ENCODE measurements at regions of chr10 and their contacts with region 1.

Region 1: GRCh38 chr10:61091531-61091930 is 147.5 kb upstream of the RHOBTB1 start:
- DNase-seq: no peak
- ATAC-seq: no peak
- H3K4me3 ChIP-seq: no peak overlapping the region
- H3K4me3 Mint-ChIP-seq: no peak overlapping the region
- H3K27ac ChIP-seq: no peak overlapping the region
- H3K27ac Mint-ChIP-seq: no peak overlapping the region
- H3K4me1 ChIP-seq: no peaks in the 10 kb centered on the region
- H3K4me1 Mint-ChIP-seq: peaks cover 6% of the 10 kb centered on the region
- H3K27me3 ChIP-seq: peaks cover 0 to 4% (median 2%) of the 10 kb centered on the region in 4 experiments
- H3K27me3 Mint-ChIP-seq: peaks cover 24% of the 10 kb centered on the region
- CTCF ChIP-seq: no peak

Region 2: GRCh38 chr10:61112771-61113170 is 21.2 kb after region 1 on chr10:
- CTCF ChIA-PET with region 1: no interaction called
- POLR2A ChIA-PET with region 1: no interaction called
- intact Hi-C with region 1: no loop called
- DNase-seq: no peak
- ATAC-seq: no peak
- H3K4me3 ChIP-seq: no peak overlapping the region
- H3K4me3 Mint-ChIP-seq: no peak overlapping the region
- H3K27ac ChIP-seq: no peak overlapping the region
- H3K27ac Mint-ChIP-seq: no peak overlapping the region
- H3K4me1 ChIP-seq: no peaks in the 10 kb centered on the region
- H3K4me1 Mint-ChIP-seq: no peaks in the 10 kb centered on the region
- H3K27me3 ChIP-seq: peaks cover 0 to 5% (median 0%) of the 10 kb centered on the region in 4 experiments
- H3K27me3 Mint-ChIP-seq: peaks cover 15% of the 10 kb centered on the region
- CTCF ChIP-seq: no peak

Region 3: DNA sequence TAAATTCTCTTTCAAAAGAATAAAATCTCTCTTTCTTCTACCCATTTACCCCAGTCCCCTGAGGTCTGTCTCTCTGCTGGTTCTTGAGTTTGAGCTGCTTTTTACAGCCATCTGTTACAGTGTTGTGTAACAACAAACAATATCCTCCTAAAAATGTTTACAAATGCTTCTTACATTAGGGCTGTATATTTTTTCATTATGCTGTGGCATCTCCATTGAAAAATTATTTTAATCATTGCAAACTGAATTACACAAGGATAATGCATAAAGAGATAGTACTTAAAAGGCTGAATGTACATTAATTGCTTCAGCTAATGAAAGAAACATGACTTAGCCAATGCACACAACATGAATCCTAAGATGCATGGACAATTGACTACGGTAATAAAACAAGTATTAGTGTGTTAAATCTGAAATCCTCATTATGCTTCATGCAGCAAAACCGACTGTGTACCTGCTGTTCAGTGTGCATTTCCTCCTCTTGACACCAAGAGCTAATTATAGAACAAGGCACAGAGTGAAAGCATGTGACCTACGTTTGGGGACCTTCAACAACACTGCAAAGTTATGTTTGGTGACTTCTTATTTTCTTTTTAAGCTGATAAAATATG is 34.1 kb after region 1 on chr10:
- CTCF ChIA-PET with region 1: no interaction called
- POLR2A ChIA-PET with region 1: no interaction called
- intact Hi-C with region 1: loop called (anchors 5 kb)
- DNase-seq: peak; percentile 57
- ATAC-seq: peak; percentile 79
- H3K4me3 ChIP-seq: peak overlapping the region in 1 of 5 experiments; percentile 52
- H3K4me3 Mint-ChIP-seq: peak overlapping the region; percentile 59
- H3K27ac ChIP-seq: peak overlapping the region; percentile 21 to 59
- H3K27ac Mint-ChIP-seq: peak overlapping the region; percentile 72
- H3K4me1 ChIP-seq: peaks cover 36 to 43% of the 10 kb centered on the region in 2 donors
- H3K4me1 Mint-ChIP-seq: peaks cover 45% of the 10 kb centered on the region
- H3K27me3 ChIP-seq: no peaks in the 10 kb centered on the region
- H3K27me3 Mint-ChIP-seq: no peaks in the 10 kb centered on the region
- CTCF ChIP-seq: no peak

Region 4: DNA sequence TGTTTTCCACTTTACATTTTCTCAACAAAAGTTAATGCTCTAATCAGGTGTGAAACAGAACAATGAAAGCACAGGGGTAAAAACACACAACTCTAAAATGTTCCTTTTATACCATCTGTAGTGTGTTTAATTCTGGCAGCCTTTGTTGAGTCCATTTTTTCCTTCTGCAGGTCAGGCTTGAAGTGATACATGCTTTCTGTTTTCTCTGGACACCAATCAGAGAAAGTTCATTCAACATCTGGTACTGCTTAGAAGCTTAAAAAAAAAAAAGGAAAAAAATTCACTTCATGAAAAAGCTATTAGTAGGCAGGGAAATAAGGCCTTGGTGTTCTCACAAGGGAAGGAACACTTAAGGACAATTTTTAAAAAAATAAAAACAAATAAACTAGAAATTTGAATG is 83.8 kb after region 1 on chr10:
- CTCF ChIA-PET with region 1: no interaction called
- POLR2A ChIA-PET with region 1: no interaction called
- intact Hi-C with region 1: no loop called
- DNase-seq: no peak
- ATAC-seq: no peak
- H3K4me3 ChIP-seq: no peak overlapping the region
- H3K4me3 Mint-ChIP-seq: no peak overlapping the region
- H3K27ac ChIP-seq: no peak overlapping the region
- H3K27ac Mint-ChIP-seq: no peak overlapping the region
- H3K4me1 ChIP-seq: no peaks in the 10 kb centered on the region
- H3K4me1 Mint-ChIP-seq: no peaks in the 10 kb centered on the region
- H3K27me3 ChIP-seq: no peaks in the 10 kb centered on the region
- H3K27me3 Mint-ChIP-seq: peaks cover 3% of the 10 kb centered on the region
- CTCF ChIP-seq: no peak

Region 5: DNA sequence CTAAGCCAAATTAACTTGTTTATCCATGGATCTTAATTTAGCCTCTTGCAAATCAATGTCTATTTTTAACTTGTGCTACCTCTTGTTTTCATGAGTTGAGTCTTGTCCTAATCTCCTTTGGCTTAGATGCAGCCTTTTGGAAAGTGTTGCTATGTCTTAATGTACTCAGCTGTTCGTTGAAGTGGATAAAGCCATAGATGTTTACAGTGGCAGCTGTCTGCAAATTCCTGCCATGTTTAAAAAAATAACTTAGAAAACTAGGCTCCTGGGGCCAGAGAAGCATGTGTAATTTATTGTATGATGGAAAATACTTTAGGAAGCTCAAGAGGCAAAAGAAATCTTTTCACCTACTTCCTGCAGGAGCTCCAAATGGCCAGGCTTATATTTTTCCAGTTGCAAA is 105.5 kb after region 1 on chr10:
- CTCF ChIA-PET with region 1: no interaction called
- POLR2A ChIA-PET with region 1: no interaction called
- intact Hi-C with region 1: no loop called
- DNase-seq: no peak
- ATAC-seq: no peak
- H3K4me3 ChIP-seq: no peak overlapping the region
- H3K4me3 Mint-ChIP-seq: no peak overlapping the region
- H3K27ac ChIP-seq: no peak overlapping the region
- H3K27ac Mint-ChIP-seq: no peak overlapping the region
- H3K4me1 ChIP-seq: no peaks in the 10 kb centered on the region
- H3K4me1 Mint-ChIP-seq: no peaks in the 10 kb centered on the region
- H3K27me3 ChIP-seq: no peaks in the 10 kb centered on the region
- H3K27me3 Mint-ChIP-seq: peaks cover 27% of the 10 kb centered on the region
- CTCF ChIP-seq: no peak